ENCODE measurements at regions of chr17 and their contacts with region 1.

Region 1: DNA sequence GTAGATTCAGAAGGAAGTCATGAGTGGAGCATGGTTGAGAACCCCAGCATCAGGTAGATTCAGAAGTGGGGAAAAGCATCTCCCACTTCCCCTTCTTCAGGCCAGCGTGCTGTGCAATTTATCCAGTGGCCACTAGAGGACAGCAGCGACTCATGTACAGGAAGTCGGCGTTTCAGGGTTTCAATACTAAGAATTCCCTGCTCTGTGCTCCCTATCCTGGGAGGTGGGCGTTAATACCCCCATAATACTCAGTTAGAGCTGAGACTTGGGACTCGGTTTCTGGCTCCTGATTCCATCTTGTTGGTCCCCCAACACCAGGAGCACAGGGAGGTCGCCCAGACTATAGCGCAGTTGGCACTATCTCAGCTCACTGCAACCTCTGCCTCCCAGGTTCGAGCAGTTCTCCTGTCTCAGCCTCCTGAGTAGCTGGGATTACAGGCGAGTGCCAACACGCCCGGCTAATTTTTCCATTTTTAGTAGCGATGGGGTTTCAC is 75.3 kb upstream of the AMZ2 start:
- DNase-seq: peak; percentile 50 to 86 (median 71)
- ATAC-seq: peak; percentile 73 to 96 (median 91)
- H3K4me3 ChIP-seq: no peak overlapping the region
- H3K27ac ChIP-seq: no peak overlapping the region
- H3K4me1 ChIP-seq: no peaks in the 10 kb centered on the region
- H3K27me3 ChIP-seq: no peaks in the 10 kb centered on the region
- CTCF ChIP-seq: peak; percentile 85 to 95 (median 94)

Region 2: GRCh38 chr17:68101075-68101992 is 71.2 kb before region 1 on chr17:
- intact Hi-C with region 1: no loop called
- DNase-seq: peak; percentile 95 to 98 (median 97)
- ATAC-seq: peak; percentile 96 to 99 (median 98)
- H3K4me3 ChIP-seq: peak overlapping the region; percentile 40 to 84 (median 62)
- H3K27ac ChIP-seq: peak overlapping the region; percentile 75 to 90 (median 88)
- H3K4me1 ChIP-seq: peaks cover 0 to 17% (median 9%) of the 10 kb centered on the region in 3 donors
- H3K27me3 ChIP-seq: no peaks in the 10 kb centered on the region
- CTCF ChIP-seq: no peak

Region 3: GRCh38 chr17:68133346-68134045 is 39.0 kb before region 1 on chr17:
- intact Hi-C with region 1: no loop called
- DNase-seq: no peak
- ATAC-seq: peak in 1 of 4 donors; percentile 31
- H3K4me3 ChIP-seq: no peak overlapping the region
- H3K27ac ChIP-seq: no peak overlapping the region
- H3K4me1 ChIP-seq: no peaks in the 10 kb centered on the region
- H3K27me3 ChIP-seq: no peaks in the 10 kb centered on the region
- CTCF ChIP-seq: no peak

Region 4: GRCh38 chr17:68462381-68463210 is 290.1 kb after region 1 on chr17:
- intact Hi-C with region 1: loop called in 1 of 3 experiments (anchors 10 kb)
- DNase-seq: peak in 4 of 6 donors; percentile 52 to 74 (median 68)
- ATAC-seq: peak; percentile 76 to 90 (median 88)
- H3K4me3 ChIP-seq: no peak overlapping the region
- H3K27ac ChIP-seq: no peak overlapping the region
- H3K4me1 ChIP-seq: peaks cover 0 to 25% (median 0%) of the 10 kb centered on the region in 3 donors
- H3K27me3 ChIP-seq: no peaks in the 10 kb centered on the region
- CTCF ChIP-seq: peak; percentile 41 to 73 (median 68)

Measured in pancreas (tissue), 10 donors.